HCT116 (cell line): ENCODE measurements at regions of chr17 and their contacts with region 1.

Region 1: DNA sequence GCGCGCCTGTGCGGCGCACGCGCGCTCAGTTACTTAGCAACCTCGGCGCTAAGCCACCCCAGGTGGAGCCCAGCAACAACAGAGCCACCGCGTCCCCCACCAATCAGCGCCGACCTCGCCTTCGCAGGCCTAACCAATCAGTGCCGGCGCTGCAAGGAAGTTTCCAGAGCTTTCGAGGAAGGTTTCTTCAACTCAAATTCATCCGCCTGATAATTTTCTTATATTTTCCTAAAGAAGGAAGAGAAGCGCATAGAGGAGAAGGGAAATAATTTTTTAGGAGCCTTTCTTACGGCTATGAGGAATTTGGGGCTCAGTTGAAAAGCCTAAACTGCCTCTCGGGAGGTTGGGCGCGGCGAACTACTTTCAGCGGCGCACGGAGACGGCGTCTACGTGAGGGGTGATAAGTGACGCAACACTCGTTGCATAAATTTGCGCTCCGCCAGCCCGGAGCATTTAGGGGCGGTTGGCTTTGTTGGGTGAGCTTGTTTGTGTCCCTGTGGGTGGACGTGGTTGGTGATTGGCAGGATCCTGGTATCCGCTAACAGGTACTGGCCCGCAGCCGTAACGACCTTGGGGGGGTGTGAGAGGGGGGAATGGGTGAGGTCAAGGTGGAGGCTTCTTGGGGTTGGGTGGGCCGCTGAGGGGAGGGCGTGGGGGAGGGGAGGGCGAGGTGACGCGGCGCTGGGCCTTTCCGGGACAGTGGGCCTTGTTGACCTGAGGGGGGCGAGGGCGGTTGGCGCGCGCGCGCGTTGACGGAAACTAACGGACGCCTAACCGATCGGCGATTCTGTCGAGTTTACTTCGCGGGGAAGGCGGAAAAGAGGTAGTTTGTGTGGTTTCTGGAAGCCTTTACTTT is at the start of gene UBB:
- DNase-seq: peak; percentile 95
- ATAC-seq: peak; percentile 95
- H3K4me3 ChIP-seq: peak within 1 kb of the TSS; percentile 86 to 96
- H3K27ac ChIP-seq: peak within 1 kb of the TSS; percentile 95
- H3K4me1 ChIP-seq: peaks cover 11 to 38% of the 10 kb centered on the region in 2 experiments; a peak in 3 of 4 replicates
- H3K27me3 ChIP-seq: no peaks in the 10 kb centered on the region
- CTCF ChIP-seq: no peak
- POLR2A ChIP-seq: peak; percentile 98
- RAD21 ChIP-seq: no peak; the same call in 1 of the 2 replicates
- total RNA-seq, gene UBB: 2,378 TPM

Region 2: DNA sequence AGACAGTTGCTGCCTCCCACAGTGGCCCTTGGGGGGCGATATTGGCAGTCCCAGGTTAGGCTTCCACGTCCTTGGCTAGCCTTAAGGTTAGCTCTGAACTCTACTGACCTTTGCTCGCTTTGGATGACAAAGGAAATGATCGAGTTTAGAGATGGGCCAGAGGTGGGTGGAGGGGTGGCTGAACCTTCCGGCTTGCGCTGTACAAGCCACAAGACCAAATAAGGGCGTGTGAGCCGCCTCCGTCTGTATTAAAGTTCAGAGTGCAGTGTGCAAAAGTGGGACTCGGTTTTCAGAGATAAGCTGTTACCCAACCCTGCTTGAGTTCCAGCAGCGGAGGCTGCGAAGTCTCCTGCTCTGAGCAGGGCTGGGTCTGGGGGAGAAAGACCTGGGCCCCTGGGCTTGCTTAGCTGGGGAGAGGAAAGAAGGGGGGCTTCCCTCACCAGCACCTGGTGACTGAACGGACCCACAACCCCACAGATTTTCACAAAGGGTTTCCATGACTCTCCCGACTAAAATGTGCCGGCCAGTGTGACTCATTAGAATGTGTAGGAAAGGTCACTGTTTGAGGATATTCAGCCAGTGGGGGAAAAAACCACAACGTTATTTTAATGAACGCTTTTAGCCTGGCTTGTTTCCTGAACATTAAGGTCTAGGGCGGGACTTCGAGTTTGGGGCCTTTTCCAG is 94.8 kb before region 1 on chr17:
- CTCF ChIA-PET with region 1: no interaction called
- POLR2A ChIA-PET with region 1: interaction called, 15 read pairs
- RAD21 ChIA-PET with region 1: interaction called in 1 of 2 experiments, 3 read pairs
- intact Hi-C with region 1: no loop called
- DNase-seq: peak; percentile 95
- ATAC-seq: peak; percentile 84
- H3K4me3 ChIP-seq: peak overlapping the region; percentile 37 to 57
- H3K27ac ChIP-seq: peak overlapping the region; percentile 97
- H3K4me1 ChIP-seq: peaks cover 76 to 77% of the 10 kb centered on the region in 2 experiments
- H3K27me3 ChIP-seq: no peaks in the 10 kb centered on the region
- CTCF ChIP-seq: peak; percentile 23 to 70 (median 67); a peak in 5 of 6 replicates
- POLR2A ChIP-seq: peak; percentile 55
- RAD21 ChIP-seq: peak; percentile 68

Region 3: DNA sequence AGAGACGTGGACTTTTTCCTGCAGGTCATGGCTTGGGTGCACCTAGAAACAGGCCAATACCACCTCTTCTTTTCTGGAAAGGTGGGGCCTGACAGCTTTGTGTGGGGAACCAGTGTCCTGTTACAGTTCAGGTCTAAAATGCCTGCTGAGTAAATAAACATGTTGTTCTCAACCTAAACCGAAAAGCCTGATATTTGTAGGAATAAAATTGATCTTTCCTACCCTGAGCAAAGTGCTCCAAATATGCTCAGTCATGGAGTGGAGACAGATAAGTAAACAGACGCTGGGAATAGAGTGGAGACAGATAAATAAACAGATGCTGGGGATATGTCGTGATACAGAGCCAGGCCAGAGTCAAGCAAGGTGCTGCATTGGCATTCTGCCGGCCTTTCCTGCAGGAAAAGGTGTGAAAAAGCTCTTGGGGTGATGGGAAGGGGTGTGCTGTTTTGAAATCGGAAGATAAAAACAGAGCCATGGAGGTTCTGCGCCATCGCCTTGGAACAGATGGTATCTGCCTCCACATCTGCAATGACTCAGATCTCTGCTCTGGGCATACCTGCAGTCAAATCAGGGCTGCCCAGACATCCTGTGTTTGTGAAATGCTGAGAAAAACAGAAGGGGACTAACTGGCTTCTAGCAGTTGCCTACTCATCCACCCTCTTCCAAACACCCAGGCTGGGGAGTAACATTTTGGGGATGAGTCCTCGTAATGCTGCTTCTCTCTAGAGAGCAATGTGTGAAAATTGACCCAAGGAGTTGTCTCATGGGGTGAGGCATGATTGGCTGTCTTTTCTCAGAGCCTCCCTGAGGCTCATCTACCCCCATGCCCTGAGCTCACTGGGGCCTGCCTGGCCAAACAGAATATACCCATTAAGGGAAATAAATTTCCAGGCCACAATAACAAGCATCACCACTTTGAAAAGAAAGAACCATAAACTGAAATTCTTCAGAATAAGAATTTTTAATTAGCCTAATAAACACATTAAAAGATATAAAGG is 17.7 kb after region 1 on chr17:
- CTCF ChIA-PET with region 1: no interaction called
- POLR2A ChIA-PET with region 1: interaction called, 14 read pairs
- RAD21 ChIA-PET with region 1: no interaction called
- intact Hi-C with region 1: no loop called
- DNase-seq: no peak
- ATAC-seq: no peak
- H3K4me3 ChIP-seq: no peak overlapping the region
- H3K27ac ChIP-seq: no peak overlapping the region
- H3K4me1 ChIP-seq: peaks cover 3 to 5% of the 10 kb centered on the region in 2 experiments; a peak in 2 of 4 replicates
- H3K27me3 ChIP-seq: no peaks in the 10 kb centered on the region
- CTCF ChIP-seq: no peak
- POLR2A ChIP-seq: no peak
- RAD21 ChIP-seq: no peak

Region 4: GRCh38 chr17:16438557-16439302 is 57.9 kb after region 1 on chr17:
- CTCF ChIA-PET with region 1: interaction called, 3 read pairs
- POLR2A ChIA-PET with region 1: interaction called, 38 read pairs
- RAD21 ChIA-PET with region 1: interaction called in 1 of 2 experiments, 3 read pairs
- intact Hi-C with region 1: loop called (anchors 2 kb)
- DNase-seq: peak; percentile 99
- ATAC-seq: peak; percentile 80
- H3K4me3 ChIP-seq: peak overlapping the region; percentile 94 to 99
- H3K27ac ChIP-seq: peak overlapping the region; percentile 97
- H3K4me1 ChIP-seq: peaks cover 10 to 47% of the 10 kb centered on the region in 2 experiments; a peak in 3 of 4 replicates
- H3K27me3 ChIP-seq: no peaks in the 10 kb centered on the region
- CTCF ChIP-seq: no peak
- POLR2A ChIP-seq: peak; percentile 98
- RAD21 ChIP-seq: no peak